HepG2 (cell line): ENCODE measurements at regions of chr2 and their contacts with region 1.

Region 1: DNA sequence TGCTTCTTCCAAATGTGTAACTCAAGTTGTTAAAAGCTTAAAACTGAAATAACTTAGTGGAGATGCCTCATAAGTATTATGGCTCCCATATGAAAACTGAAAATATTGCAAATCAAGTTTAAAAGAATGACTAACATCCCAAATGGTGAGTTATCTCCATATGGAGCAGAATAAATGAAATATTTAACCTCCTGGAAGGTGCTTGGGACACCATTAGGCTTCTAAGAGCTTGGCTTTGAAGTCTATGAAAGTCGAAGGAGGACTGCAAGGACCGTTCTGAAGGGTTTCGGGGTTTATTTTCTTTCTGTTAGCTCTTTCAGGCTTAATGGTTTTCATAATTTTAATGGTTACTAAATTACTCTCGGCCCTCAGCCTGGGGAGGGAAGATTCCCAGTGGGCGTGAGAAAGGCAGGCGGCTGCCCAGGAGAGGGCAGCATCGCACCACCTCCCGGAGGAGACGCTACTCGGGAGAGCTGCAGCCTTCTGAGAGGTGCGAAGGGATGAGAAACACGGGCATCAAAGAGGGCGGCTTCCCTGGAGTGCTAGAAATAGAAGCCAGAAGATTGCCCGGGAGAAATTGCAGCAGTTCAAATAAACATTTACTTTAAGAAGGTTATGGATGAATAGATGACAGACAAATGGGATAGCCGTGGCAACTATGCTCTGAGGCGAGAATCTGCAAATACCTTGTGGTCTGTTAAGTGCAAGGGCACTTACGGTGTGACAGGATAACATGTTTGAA is 43.1 kb downstream of the MAP3K19 start:
- DNase-seq: peak; percentile 54
- ATAC-seq: peak; percentile 100
- H3K4me3 ChIP-seq: no peak overlapping the region
- H3K27ac ChIP-seq: no peak overlapping the region
- H3K4me1 ChIP-seq: peaks cover 6% of the 10 kb centered on the region
- H3K27me3 ChIP-seq: peaks cover 0 to 10% of the 10 kb centered on the region in 2 experiments; a peak in 2 of 5 replicates
- CTCF ChIP-seq: peak; percentile 98
- EP300 ChIP-seq: no peak
- POLR2A ChIP-seq: no peak
- RAD21 ChIP-seq: peak; percentile 97

Region 2: DNA sequence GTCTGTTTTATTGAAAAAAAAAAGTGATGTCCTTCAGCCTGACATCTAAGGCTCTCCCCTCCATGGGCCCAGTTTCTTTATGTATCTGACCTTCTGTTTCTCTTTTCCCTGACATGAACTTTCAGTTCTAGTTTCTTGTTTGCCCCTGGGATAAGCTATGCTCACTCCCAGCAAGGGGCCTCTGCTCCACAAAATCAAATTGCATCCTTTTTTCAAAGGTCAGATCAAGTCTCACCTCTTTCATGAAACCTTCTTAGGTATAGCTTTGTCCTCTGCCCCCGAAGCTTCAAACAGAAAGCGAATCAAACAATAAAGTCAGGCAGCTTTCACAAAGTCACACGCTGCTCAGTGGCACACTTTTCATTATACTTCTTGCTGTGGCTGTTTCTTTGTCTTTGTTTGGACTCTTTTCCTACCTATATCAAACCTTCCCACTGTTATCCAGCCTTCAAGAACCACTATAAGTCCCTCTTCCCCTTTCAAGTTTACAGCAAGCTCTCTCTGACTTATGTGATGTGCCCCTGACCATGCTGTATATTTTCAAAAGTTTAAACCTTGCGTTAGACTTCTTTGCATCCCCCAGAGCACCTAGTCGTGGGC is 19.8 kb after region 1 on chr2:
- CTCF ChIA-PET with region 1: no interaction called
- POLR2A ChIA-PET with region 1: no interaction called
- in situ Hi-C with region 1: no loop called
- intact Hi-C with region 1: no loop called
- DNase-seq: no peak
- ATAC-seq: peak; percentile 34; the same call in 2 of the 3 replicates
- H3K4me3 ChIP-seq: no peak overlapping the region
- H3K27ac ChIP-seq: no peak overlapping the region
- H3K4me1 ChIP-seq: 0 out of 2 replicates have a peak, but pooled peaks cover 7% of the 10 kb centered on the region
- H3K27me3 ChIP-seq: no peaks in the 10 kb centered on the region
- CTCF ChIP-seq: no peak
- EP300 ChIP-seq: no peak
- POLR2A ChIP-seq: no peak
- RAD21 ChIP-seq: no peak

Region 3: DNA sequence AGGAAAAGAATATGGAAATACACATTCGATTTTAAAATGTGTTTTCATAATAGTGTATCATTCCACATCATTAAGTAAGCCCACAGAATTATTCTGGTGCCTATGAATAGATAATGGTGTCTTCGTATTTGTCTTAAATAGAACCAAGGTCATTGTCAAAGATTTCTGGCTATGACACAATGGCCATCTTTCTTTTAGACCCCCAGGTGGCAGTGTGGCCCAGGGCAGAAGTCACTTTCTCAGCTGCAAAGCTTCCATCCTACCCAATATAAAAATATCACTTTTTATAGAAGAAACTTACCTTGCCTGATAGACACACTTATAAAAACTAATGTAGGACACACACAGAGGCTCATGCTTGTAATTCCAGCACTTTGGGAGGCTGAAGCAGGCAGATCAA is 469.4 kb after region 1 on chr2:
- CTCF ChIA-PET with region 1: interaction called, 5 read pairs
- POLR2A ChIA-PET with region 1: no interaction called
- in situ Hi-C with region 1: no loop called
- intact Hi-C with region 1: loop called (anchors 1 kb)
- DNase-seq: peak; percentile 57
- ATAC-seq: peak; percentile 87
- H3K4me3 ChIP-seq: no peak overlapping the region
- H3K27ac ChIP-seq: no peak overlapping the region
- H3K4me1 ChIP-seq: no peaks in the 10 kb centered on the region
- H3K27me3 ChIP-seq: no peaks in the 10 kb centered on the region
- CTCF ChIP-seq: peak; percentile 74
- EP300 ChIP-seq: no peak
- POLR2A ChIP-seq: no peak
- RAD21 ChIP-seq: peak; percentile 69

Region 4: DNA sequence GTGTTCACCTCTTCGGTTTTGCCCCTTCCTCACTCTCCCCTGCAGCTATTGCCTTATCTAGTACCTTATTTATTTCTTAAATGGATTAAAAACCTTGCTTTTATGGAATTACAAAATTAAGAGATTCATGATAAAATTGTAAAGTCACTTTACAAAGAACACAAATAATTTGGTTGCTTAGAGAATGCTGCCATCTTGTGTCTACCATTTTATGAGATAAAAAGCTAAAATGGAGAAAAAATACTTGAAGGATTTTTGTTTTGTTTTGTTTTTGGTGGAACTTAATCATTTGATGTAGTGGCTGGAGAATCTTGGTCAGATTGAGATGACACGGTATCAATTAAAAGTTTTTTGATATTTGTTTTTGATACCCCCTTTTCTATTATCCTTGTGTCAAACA is 596.7 kb after region 1 on chr2:
- CTCF ChIA-PET with region 1: interaction called, 8 read pairs
- POLR2A ChIA-PET with region 1: interaction called, 3 read pairs
- in situ Hi-C with region 1: no loop called
- intact Hi-C with region 1: loop called (anchors 5 kb)
- DNase-seq: no peak
- ATAC-seq: no peak
- H3K4me3 ChIP-seq: no peak overlapping the region
- H3K27ac ChIP-seq: no peak overlapping the region
- H3K4me1 ChIP-seq: peaks cover 5% of the 10 kb centered on the region; the same call in 1 of the 2 replicates
- H3K27me3 ChIP-seq: no peaks in the 10 kb centered on the region
- CTCF ChIP-seq: peak; percentile 16; the same call in 1 of the 2 replicates
- EP300 ChIP-seq: no peak
- POLR2A ChIP-seq: no peak
- RAD21 ChIP-seq: no peak

Region 5: DNA sequence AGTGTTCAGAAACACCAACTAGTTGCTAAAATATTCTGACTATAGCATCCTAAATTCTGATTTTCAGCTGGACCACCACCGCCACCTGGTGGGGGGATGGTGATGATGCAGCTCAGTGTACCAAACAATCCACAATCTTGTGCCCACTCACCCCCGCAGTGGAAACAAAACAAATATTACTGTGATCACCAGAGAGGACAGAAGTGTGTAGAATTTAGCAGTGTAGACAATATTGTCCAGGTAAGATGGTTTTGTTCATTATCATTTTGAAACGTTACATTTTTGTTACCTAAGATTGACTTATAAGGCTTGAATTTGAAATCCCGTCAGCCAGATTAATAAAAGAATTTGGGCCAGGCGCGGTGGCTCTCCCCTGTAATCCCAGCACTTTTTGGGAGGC is 705.8 kb after region 1 on chr2:
- CTCF ChIA-PET with region 1: interaction called, 22 read pairs
- POLR2A ChIA-PET with region 1: no interaction called
- in situ Hi-C with region 1: no loop called
- intact Hi-C with region 1: loop called (anchors 1 kb)
- DNase-seq: peak; percentile 44
- ATAC-seq: peak; percentile 87
- H3K4me3 ChIP-seq: no peak overlapping the region
- H3K27ac ChIP-seq: no peak overlapping the region
- H3K4me1 ChIP-seq: no peaks in the 10 kb centered on the region
- H3K27me3 ChIP-seq: no peaks in the 10 kb centered on the region
- CTCF ChIP-seq: peak; percentile 90
- EP300 ChIP-seq: no peak
- POLR2A ChIP-seq: no peak
- RAD21 ChIP-seq: peak; percentile 77